HCT116 (cell line): ENCODE measurements at regions of chr2 and their contacts with region 1.

Region 1: DNA sequence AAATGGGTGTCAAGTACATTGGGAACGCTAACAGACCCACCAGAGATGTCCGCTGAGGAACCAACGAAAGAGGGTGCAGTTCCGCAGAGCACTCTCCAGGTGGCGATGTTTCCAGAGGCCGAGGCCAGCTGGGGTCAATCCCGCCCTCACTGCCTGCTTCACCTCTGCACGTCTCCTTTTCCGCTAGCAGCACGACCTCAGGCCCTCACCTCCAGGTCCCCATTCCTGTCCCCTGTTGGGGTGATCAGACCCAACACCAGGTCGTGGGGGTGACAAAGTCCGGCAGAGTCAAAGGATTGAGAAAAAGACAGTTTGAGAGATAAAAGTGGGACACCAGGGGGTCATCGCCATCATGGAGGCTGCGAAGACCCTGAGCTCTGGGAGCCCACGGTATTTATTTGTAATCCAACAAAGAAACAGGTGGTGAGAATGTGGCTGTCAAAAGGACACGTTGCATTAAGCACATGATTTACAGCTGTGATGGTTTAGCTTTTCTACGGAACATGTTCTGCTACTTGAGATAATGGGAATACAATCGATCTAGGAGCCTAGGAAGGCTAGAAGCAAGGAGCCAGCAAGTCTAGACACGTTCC is 27.3 kb downstream of the ZAP70 start:
- DNase-seq: peak; percentile 29
- ATAC-seq: peak; percentile 86
- H3K4me3 ChIP-seq: no peak overlapping the region
- H3K27ac ChIP-seq: no peak overlapping the region
- H3K4me1 ChIP-seq: peaks cover 0 to 18% of the 10 kb centered on the region in 2 experiments; a peak in 2 of 4 replicates
- H3K27me3 ChIP-seq: no peaks in the 10 kb centered on the region
- CTCF ChIP-seq: peak; percentile 57 to 91 (median 82); a peak in 5 of 6 replicates
- POLR2A ChIP-seq: no peak
- RAD21 ChIP-seq: peak; percentile 69

Region 2: GRCh38 chr2:97730245-97730644 is 10.4 kb before region 1 on chr2:
- CTCF ChIA-PET with region 1: interaction called, 12 read pairs
- POLR2A ChIA-PET with region 1: no interaction called
- RAD21 ChIA-PET with region 1: no interaction called
- intact Hi-C with region 1: no loop called
- DNase-seq: no peak
- ATAC-seq: no peak
- H3K4me3 ChIP-seq: no peak overlapping the region
- H3K27ac ChIP-seq: no peak overlapping the region
- H3K4me1 ChIP-seq: peaks cover 0 to 5% of the 10 kb centered on the region in 2 experiments; a peak in 2 of 4 replicates
- H3K27me3 ChIP-seq: no peaks in the 10 kb centered on the region
- CTCF ChIP-seq: no peak
- POLR2A ChIP-seq: no peak
- RAD21 ChIP-seq: no peak